ENCODE measurements at regions of chr17 and their contacts with region 1.

Region 1: GRCh38 chr17:76452660-76453430 is at the start of gene UBE2O:
- DNase-seq: peak; percentile 95
- H3K4me3 ChIP-seq: peak within 1 kb of the TSS; percentile 83 to 98 (median 94)
- H3K27ac ChIP-seq: peak within 1 kb of the TSS; percentile 77 to 85 (median 82)
- H3K4me1 ChIP-seq: peaks cover 18 to 29% (median 22%) of the 10 kb centered on the region in 4 donors
- H3K27me3 ChIP-seq: no peaks in the 10 kb centered on the region
- CTCF ChIP-seq: peak; percentile 15 to 56 (median 15)
- EP300 ChIP-seq: no peak
- POLR2A ChIP-seq: no peak
- total RNA-seq, gene UBE2O: 14.1 to 21.7 (median 19.0) TPM

Region 2: DNA sequence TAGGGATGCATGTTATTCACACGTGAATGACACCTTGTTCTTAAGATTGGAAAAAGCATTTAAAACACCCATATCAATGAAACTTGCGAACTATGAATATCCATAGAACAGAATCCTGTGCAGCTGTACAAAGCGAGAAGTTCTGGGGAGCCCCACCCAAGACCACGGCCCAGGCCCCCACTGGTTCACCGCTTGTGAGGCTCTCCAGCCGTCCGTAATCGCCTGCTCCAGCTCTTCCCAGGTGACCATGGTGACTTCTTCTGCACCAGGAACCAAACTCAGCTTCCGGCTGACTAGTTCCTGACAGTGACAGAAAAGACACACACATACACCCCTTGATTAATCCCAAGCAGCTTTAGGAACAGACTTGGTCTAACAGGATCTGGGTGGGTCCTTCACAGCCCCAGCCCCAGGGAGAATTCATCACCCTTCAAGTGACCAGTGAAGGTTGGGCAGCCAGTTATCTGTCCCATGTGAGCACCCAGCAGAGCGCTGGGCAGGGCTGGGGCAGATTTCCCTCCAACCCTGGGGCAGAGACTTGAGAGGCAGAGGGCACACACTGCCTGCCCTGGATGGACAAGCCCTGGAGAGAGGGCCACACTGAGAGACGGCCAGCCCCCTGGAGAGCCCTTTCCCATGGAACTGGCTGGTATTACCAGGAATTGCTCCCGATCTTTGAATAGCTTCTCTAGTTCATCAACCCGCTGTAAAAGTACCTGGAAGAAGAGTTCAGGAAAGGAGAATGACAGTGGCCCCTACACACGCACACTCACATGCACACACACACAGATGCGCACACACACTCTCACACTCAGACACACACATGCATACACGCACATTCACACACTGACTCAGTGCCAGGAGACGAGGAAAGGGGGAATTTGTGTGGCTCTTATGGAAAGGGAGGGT is 148.4 kb before region 1 on chr17:
- intact Hi-C with region 1: no loop called
- DNase-seq: no peak
- H3K4me3 ChIP-seq: no peak overlapping the region
- H3K27ac ChIP-seq: no peak overlapping the region
- H3K4me1 ChIP-seq: no peaks in the 10 kb centered on the region
- H3K27me3 ChIP-seq: no peaks in the 10 kb centered on the region
- CTCF ChIP-seq: no peak
- EP300 ChIP-seq: no peak
- POLR2A ChIP-seq: no peak

Region 3: DNA sequence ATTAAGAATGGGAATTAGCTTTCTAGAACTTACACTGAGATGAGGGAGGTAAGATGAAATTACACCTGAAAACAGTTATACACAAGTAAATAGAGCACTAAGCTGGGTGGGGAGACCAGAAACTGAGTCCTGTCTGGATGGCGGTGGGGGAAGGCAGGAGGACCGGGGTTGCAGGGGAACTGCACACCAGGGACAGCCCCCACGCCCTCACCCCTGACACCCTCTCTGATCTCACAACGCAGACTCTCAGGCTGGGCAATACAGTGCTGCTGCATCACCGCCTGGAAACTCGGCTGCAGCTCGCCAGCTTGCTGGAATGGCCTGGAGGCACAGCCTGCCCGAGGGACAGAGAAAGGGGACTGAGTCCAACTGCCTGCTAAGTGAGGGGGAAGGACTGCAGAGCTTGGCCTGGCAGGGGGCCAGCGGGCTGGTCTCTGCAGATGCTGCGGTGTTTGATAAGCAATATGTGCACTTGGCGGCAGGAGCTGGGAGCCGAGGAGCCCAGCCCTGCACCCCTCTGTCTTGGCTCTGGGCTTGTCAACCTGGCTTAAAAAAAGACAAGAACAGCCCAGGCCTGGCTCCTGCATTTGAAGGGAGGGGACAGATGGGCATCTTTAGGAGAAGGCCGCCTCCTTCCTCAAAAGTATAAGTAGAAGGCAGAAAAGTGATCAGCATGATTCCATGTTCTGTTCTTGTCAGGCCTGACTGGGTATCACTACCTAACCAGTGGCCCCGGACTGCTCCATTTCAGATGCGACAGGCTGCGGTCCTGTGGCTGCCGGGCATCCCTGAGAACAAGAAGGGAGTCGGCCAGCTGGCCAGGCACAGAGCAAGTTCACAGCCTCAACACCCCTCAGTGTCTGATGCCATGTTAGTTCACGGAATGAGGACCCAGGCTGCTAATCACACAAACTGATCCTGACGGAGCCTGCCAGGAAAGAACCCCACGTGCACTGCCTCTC is 38.2 kb before region 1 on chr17:
- intact Hi-C with region 1: loop called (anchors 5 kb)
- DNase-seq: no peak
- H3K4me3 ChIP-seq: no peak overlapping the region
- H3K27ac ChIP-seq: no peak overlapping the region
- H3K4me1 ChIP-seq: peaks cover 14 to 22% (median 17%) of the 10 kb centered on the region in 4 donors
- H3K27me3 ChIP-seq: no peaks in the 10 kb centered on the region
- CTCF ChIP-seq: no peak
- EP300 ChIP-seq: no peak
- POLR2A ChIP-seq: no peak

Measured in esophagus muscularis mucosa (tissue), 4 donors.